CD8-positive, alpha-beta T cell (primary cell): ENCODE measurements at regions of chr10 and their contacts with region 1.

Region 1: GRCh38 chr10:110007701-110008517 is at the start of gene ADD3:
- DNase-seq: peak; percentile 86 to 97 (median 95)
- ATAC-seq: peak; percentile 71
- H3K4me3 ChIP-seq: peak within 1 kb of the TSS; percentile 85 to 86
- H3K4me3 Mint-ChIP-seq: no peak within 1 kb of the TSS
- H3K27ac ChIP-seq: peak within 1 kb of the TSS; percentile 77 to 82
- H3K27ac Mint-ChIP-seq: peak within 1 kb of the TSS; percentile 92
- H3K4me1 ChIP-seq: peaks cover 34% of the 10 kb centered on the region
- H3K4me1 Mint-ChIP-seq: peaks cover 42% of the 10 kb centered on the region
- H3K27me3 ChIP-seq: no peaks in the 10 kb centered on the region
- H3K27me3 Mint-ChIP-seq: no peaks in the 10 kb centered on the region
- CTCF ChIP-seq: no peak
- total RNA-seq, gene ADD3: 135 to 148 TPM

Region 2: DNA sequence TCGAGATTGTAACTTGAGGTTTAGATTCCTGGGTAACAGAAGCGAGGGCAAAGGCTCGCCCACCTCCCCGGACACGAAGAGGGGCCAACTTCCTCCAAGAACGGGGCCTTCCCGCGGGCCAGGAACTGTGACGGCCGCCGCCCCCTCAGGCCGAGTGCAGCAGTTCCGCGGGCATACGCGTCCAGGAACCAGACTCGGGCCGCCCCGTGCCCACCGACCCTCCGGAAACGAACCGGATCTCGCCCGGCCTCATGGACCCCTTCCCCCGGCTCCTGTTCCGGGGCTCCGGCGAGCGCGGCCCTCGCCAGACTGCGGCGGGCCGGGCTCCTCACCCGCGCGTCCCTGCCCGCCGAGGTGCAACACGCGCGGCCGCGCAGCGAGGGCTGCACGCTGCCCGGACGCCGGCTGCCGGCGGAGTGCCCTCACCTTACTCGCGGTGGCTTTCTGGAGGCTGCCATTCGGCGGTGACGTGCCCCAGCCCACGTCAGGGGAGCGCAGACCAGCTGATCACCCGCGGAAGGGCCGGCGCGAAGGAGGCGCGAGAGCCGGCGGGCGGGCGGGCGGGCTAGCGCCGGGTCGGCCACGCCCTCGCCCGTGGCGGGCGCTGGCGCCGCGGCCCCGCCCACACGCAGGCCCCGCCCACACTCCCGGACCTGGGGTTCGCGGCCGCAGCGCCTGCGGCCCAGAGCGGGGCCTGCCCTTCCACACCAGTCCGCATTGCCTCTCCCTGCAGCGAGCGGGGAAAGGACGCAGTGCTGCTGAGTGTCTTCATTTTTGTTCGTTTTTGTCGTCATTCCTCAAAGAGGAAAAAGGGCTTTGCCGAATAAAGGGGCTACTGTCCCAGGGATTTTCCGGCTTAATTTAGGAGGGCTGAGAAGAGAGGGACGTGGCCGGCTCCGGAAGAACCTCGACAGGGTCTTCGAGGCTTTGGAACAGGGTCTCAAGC is 84.7 kb before region 1 on chr10 and contains the start of gene XPNPEP1:
- CTCF ChIA-PET with region 1: no interaction called
- POLR2A ChIA-PET with region 1: interaction called, 4 read pairs
- intact Hi-C with region 1: loop called (anchors 1 to 2 kb)
- DNase-seq: peak; percentile 55 to 93 (median 78)
- ATAC-seq: peak; percentile 90
- H3K4me3 ChIP-seq: peak within 1 kb of the TSS; percentile 75 to 80
- H3K4me3 Mint-ChIP-seq: peak within 1 kb of the TSS; percentile 87
- H3K27ac ChIP-seq: peak within 1 kb of the TSS; percentile 76 to 91
- H3K27ac Mint-ChIP-seq: peak within 1 kb of the TSS; percentile 92
- H3K4me1 ChIP-seq: peaks cover 37% of the 10 kb centered on the region
- H3K4me1 Mint-ChIP-seq: peaks cover 52% of the 10 kb centered on the region
- H3K27me3 ChIP-seq: no peaks in the 10 kb centered on the region
- H3K27me3 Mint-ChIP-seq: no peaks in the 10 kb centered on the region
- CTCF ChIP-seq: no peak
- total RNA-seq, gene XPNPEP1: 50.4 to 54.7 TPM

Region 3: DNA sequence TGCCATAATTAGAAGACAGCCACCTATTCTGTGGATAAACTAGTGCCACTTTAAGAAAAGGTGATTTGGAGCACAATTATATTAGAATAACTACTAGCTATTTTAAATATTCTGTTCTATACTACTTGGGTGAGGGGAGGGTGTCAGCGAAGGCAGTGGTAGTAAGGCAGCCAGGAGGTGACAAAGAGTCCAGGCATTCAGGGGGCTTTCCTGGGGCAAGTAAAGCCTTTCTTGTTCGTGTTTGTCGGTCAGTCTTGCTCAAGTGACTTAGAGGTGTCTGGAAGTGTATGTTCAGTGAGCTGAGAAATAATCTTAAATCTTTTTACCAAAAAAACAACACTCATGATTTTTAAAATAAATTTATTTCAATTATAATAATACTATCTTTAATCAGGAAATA is 34.3 kb after region 1 on chr10:
- CTCF ChIA-PET with region 1: no interaction called
- POLR2A ChIA-PET with region 1: no interaction called
- intact Hi-C with region 1: loop called in 1 of 2 experiments (anchors 5 kb)
- DNase-seq: no peak
- ATAC-seq: no peak
- H3K4me3 ChIP-seq: no peak overlapping the region
- H3K4me3 Mint-ChIP-seq: no peak overlapping the region
- H3K27ac ChIP-seq: no peak overlapping the region
- H3K27ac Mint-ChIP-seq: no peak overlapping the region
- H3K4me1 ChIP-seq: peaks cover 41% of the 10 kb centered on the region
- H3K4me1 Mint-ChIP-seq: peaks cover 72% of the 10 kb centered on the region
- H3K27me3 ChIP-seq: no peaks in the 10 kb centered on the region
- H3K27me3 Mint-ChIP-seq: no peaks in the 10 kb centered on the region
- CTCF ChIP-seq: no peak

Region 4: GRCh38 chr10:110137142-110137545 is 129.2 kb after region 1 on chr10:
- CTCF ChIA-PET with region 1: no interaction called
- POLR2A ChIA-PET with region 1: no interaction called
- intact Hi-C with region 1: loop called in 1 of 2 experiments (anchors 5 kb)
- DNase-seq: peak in 2 of 9 experiments; percentile 67 to 79
- ATAC-seq: peak; percentile 74
- H3K4me3 ChIP-seq: no peak overlapping the region
- H3K4me3 Mint-ChIP-seq: no peak overlapping the region
- H3K27ac ChIP-seq: peak overlapping the region in 1 of 2 experiments; percentile 2
- H3K27ac Mint-ChIP-seq: peak overlapping the region; percentile 23
- H3K4me1 ChIP-seq: peaks cover 9% of the 10 kb centered on the region
- H3K4me1 Mint-ChIP-seq: peaks cover 21% of the 10 kb centered on the region
- H3K27me3 ChIP-seq: no peaks in the 10 kb centered on the region
- H3K27me3 Mint-ChIP-seq: no peaks in the 10 kb centered on the region
- CTCF ChIP-seq: peak; percentile 97

Region 5: DNA sequence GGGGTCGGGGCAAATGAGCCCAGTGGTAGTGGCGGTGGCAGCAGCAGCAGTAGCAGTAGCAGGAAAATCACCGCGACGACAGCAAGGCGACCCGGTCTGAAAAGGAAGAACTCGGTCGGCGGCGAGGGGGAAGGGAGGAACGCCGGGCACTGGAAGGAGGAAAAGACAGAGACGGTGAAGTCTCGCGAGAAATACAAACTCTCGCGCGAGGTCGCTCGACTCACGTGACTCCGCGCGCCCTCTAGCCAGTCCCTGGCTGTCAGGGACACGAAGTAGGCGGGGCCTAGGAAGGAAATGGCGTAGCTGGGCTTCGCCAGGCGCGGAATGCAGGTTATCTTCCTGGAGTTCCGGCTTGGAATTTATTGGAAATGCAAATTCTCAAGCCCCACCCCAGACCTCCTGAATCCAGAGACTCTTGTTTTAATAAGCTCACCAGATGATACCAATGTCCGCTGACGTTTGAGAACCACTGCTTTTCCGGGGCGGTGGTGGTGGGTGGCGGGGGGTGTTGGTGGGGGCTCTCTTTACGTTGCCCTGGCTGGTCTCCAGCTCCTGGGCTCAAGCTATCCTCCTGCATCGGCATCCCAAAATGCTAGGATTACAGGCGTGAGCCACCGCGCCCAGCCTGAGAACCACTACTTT is 297.0 kb after region 1 on chr10 and contains the start of gene SMNDC1:
- CTCF ChIA-PET with region 1: no interaction called
- POLR2A ChIA-PET with region 1: no interaction called
- intact Hi-C with region 1: loop called (anchors 1 to 5 kb)
- DNase-seq: peak; percentile 94 to 98 (median 97)
- ATAC-seq: peak; percentile 88
- H3K4me3 ChIP-seq: peak within 1 kb of the TSS; percentile 72 to 85
- H3K4me3 Mint-ChIP-seq: peak within 1 kb of the TSS; percentile 98
- H3K27ac ChIP-seq: peak within 1 kb of the TSS; percentile 89 to 95
- H3K27ac Mint-ChIP-seq: peak within 1 kb of the TSS; percentile 100
- H3K4me1 ChIP-seq: peaks cover 45% of the 10 kb centered on the region
- H3K4me1 Mint-ChIP-seq: peaks cover 55% of the 10 kb centered on the region
- H3K27me3 ChIP-seq: no peaks in the 10 kb centered on the region
- H3K27me3 Mint-ChIP-seq: no peaks in the 10 kb centered on the region
- CTCF ChIP-seq: no peak
- total RNA-seq, gene SMNDC1: 43.3 to 44.8 TPM

Region 6: GRCh38 chr10:110567201-110568054 is 559.5 kb after region 1 on chr10 and contains the start of gene SMC3:
- CTCF ChIA-PET with region 1: interaction called, 3 read pairs
- POLR2A ChIA-PET with region 1: no interaction called
- intact Hi-C with region 1: loop called in 1 of 2 experiments (anchors 5 kb)
- DNase-seq: peak; percentile 83 to 95 (median 90)
- ATAC-seq: peak; percentile 89
- H3K4me3 ChIP-seq: peak within 1 kb of the TSS; percentile 92 to 93
- H3K4me3 Mint-ChIP-seq: peak within 1 kb of the TSS; percentile 97
- H3K27ac ChIP-seq: peak within 1 kb of the TSS; percentile 85 to 86
- H3K27ac Mint-ChIP-seq: peak within 1 kb of the TSS; percentile 96
- H3K4me1 ChIP-seq: peaks cover 44% of the 10 kb centered on the region
- H3K4me1 Mint-ChIP-seq: peaks cover 44% of the 10 kb centered on the region
- H3K27me3 ChIP-seq: no peaks in the 10 kb centered on the region
- H3K27me3 Mint-ChIP-seq: peaks cover 12% of the 10 kb centered on the region
- CTCF ChIP-seq: no peak
- total RNA-seq, gene SMC3: 35.1 to 37.9 TPM

Region 7: GRCh38 chr10:110746254-110746826 is 738.4 kb after region 1 on chr10:
- CTCF ChIA-PET with region 1: no interaction called
- POLR2A ChIA-PET with region 1: no interaction called
- intact Hi-C with region 1: no loop called
- DNase-seq: peak; percentile 22 to 75 (median 46)
- ATAC-seq: peak; percentile 37
- H3K4me3 ChIP-seq: no peak overlapping the region
- H3K4me3 Mint-ChIP-seq: no peak overlapping the region
- H3K27ac ChIP-seq: no peak overlapping the region
- H3K27ac Mint-ChIP-seq: no peak overlapping the region
- H3K4me1 ChIP-seq: peaks cover 22% of the 10 kb centered on the region
- H3K4me1 Mint-ChIP-seq: peaks cover 52% of the 10 kb centered on the region
- H3K27me3 ChIP-seq: no peaks in the 10 kb centered on the region
- H3K27me3 Mint-ChIP-seq: no peaks in the 10 kb centered on the region
- CTCF ChIP-seq: peak; percentile 89